ENCODE measurements at regions of chr20 and their contacts with region 1.

Region 1: DNA sequence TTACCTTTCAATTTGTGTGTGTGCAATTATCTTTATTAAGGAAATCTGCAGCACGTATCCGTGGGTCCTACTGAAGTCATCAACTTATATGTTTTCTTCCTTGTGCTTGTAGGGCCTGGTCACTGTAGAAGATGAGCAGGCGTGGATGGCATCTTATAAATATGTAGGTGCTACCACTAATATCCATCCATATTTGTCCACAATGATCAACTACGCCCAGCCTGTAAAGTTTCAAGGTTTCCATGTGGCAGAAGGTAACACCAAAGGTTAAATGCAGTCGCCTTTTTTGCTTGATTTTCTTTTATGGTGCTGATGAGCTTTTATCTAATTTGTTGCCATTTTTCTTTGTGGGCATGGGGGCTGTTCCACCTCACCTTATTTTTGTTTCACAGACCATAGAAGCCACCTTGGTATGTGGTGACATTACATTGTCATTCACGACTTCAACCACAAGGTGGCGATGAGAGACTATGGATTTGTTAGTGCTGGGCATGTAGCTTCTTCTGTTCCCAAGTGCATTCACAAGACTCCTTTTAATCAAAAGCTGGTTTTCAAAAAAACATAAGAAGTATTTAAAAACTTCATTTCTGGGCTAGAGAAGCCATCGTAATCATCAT is 106.5 kb upstream of the LAMP5 start:
- DNase-seq: peak; percentile 84
- H3K4me3 ChIP-seq: no peak overlapping the region
- H3K27ac ChIP-seq: no peak overlapping the region
- H3K27me3 ChIP-seq: no peaks in the 10 kb centered on the region
- CTCF ChIP-seq: peak; percentile 79

Region 2: GRCh38 chr20:9616833-9617489 is 209.0 kb after region 1 on chr20:
- in situ Hi-C with region 1: loop called (anchors 25 kb)
- DNase-seq: peak; percentile 56
- H3K4me3 ChIP-seq: no peak overlapping the region
- H3K27ac ChIP-seq: no peak overlapping the region
- H3K27me3 ChIP-seq: no peaks in the 10 kb centered on the region
- CTCF ChIP-seq: peak; percentile 85

Measured in brain microvascular endothelial cell (primary cell).